T-cell (primary cell): ENCODE measurements at regions of chr9 and their contacts with region 1.

Region 1: GRCh38 chr9:2158111-2158610 is 143.0 kb downstream of the SMARCA2 start:
- DNase-seq: peak in 32 of 35 experiments; percentile 6 to 67 (median 28)
- ATAC-seq: peak; percentile 60 to 86 (median 65)
- H3K4me3 ChIP-seq: peak overlapping the region; percentile 48 to 71
- H3K4me3 Mint-ChIP-seq: peak overlapping the region; percentile 77 to 91 (median 78)
- H3K27ac ChIP-seq: peak overlapping the region; percentile 47
- H3K27ac Mint-ChIP-seq: peak overlapping the region; percentile 82 to 87
- H3K4me1 ChIP-seq: peaks cover 18 to 31% of the 10 kb centered on the region in 2 experiments
- H3K4me1 Mint-ChIP-seq: peaks cover 71 to 79% (median 74%) of the 10 kb centered on the region in 3 donors
- H3K27me3 ChIP-seq: no peaks in the 10 kb centered on the region
- H3K27me3 Mint-ChIP-seq: no peaks in the 10 kb centered on the region

Region 2: GRCh38 chr9:2008372-2008771 is 149.8 kb before region 1 on chr9:
- CTCF ChIA-PET with region 1: no interaction called
- POLR2A ChIA-PET with region 1: no interaction called
- DNase-seq: no peak
- ATAC-seq: no peak
- H3K4me3 ChIP-seq: no peak overlapping the region
- H3K4me3 Mint-ChIP-seq: no peak overlapping the region
- H3K27ac ChIP-seq: no peak overlapping the region
- H3K27ac Mint-ChIP-seq: no peak overlapping the region
- H3K4me1 ChIP-seq: peaks cover 0 to 15% of the 10 kb centered on the region in 2 experiments
- H3K4me1 Mint-ChIP-seq: peaks cover 19 to 27% (median 24%) of the 10 kb centered on the region in 3 donors
- H3K27me3 ChIP-seq: peaks cover 0 to 4% of the 10 kb centered on the region in 2 experiments
- H3K27me3 Mint-ChIP-seq: peaks cover 0 to 1% of the 10 kb centered on the region in 2 donors

Region 3: GRCh38 chr9:2023532-2023931 is 134.6 kb before region 1 on chr9:
- CTCF ChIA-PET with region 1: no interaction called
- POLR2A ChIA-PET with region 1: no interaction called
- DNase-seq: no peak
- ATAC-seq: no peak
- H3K4me3 ChIP-seq: no peak overlapping the region
- H3K4me3 Mint-ChIP-seq: peak overlapping the region; percentile 58 to 73 (median 62)
- H3K27ac ChIP-seq: peak overlapping the region; percentile 43
- H3K27ac Mint-ChIP-seq: peak overlapping the region; percentile 87 to 90
- H3K4me1 ChIP-seq: peaks cover 63 to 80% of the 10 kb centered on the region in 2 experiments
- H3K4me1 Mint-ChIP-seq: peaks cover 97 to 99% (median 98%) of the 10 kb centered on the region in 3 donors
- H3K27me3 ChIP-seq: no peaks in the 10 kb centered on the region
- H3K27me3 Mint-ChIP-seq: no peaks in the 10 kb centered on the region

Region 4: DNA sequence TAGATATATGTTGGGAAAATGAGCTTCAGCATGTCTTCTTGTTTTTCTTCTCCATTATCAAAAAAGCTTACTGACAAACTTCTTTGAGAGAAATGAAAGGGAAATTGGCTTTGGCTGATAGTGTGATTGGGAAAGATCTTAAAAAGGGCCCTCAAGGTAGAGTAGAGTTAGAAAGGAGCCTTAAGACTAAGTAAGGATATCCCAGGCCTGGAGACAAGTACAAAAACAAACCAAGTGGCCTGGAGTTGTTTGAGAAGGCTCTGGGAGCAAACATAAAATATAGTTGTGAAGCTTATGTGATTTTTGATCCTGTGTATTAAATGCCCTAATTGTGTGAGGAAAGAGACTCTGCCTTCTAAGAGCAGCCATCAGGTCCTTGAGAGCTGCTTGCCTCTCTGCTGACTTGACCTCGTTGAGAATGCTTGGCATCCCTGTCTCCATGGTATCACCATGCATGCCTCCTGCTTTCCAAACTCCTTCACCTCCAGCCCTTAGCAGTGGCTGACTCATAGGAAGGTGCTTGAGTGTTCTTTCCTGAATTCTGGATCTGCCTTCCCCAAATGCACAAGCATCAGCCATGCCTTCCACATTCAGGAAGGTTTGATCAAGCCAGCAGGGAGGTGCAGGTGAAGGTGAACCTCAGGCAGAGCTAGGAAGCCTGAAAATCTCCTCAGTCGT is 64.1 kb before region 1 on chr9:
- CTCF ChIA-PET with region 1: interaction called in 1 of 2 experiments, 3 read pairs
- POLR2A ChIA-PET with region 1: interaction called in 1 of 2 experiments, 12 read pairs
- DNase-seq: no peak
- ATAC-seq: no peak
- H3K4me3 ChIP-seq: no peak overlapping the region
- H3K4me3 Mint-ChIP-seq: no peak overlapping the region
- H3K27ac ChIP-seq: no peak overlapping the region
- H3K27ac Mint-ChIP-seq: no peak overlapping the region
- H3K4me1 ChIP-seq: no peaks in the 10 kb centered on the region
- H3K4me1 Mint-ChIP-seq: peaks cover 0 to 7% (median 2%) of the 10 kb centered on the region in 3 donors
- H3K27me3 ChIP-seq: no peaks in the 10 kb centered on the region
- H3K27me3 Mint-ChIP-seq: no peaks in the 10 kb centered on the region

Region 5: DNA sequence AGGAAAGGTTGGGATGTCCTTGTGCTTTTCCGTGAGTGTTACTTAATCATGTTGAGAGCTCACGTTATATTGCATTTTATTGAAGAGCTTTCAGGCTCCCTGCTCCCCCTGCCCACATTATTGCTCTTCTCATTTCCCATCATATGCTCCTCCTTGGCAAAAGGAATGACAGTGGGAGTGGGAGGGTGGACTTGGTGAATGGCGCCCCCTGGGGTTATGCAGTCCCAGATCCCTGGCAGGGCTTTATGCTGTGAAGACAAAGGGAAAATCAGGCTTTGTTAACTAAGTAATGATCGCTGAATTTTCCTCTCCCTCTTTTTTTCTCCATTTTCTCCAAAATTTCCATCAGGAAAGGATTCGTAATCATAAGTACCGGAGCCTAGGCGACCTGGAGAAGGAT is 23.6 kb after region 1 on chr9:
- CTCF ChIA-PET with region 1: interaction called in 1 of 2 experiments, 5 read pairs
- POLR2A ChIA-PET with region 1: interaction called in 1 of 2 experiments, 10 read pairs
- DNase-seq: peak in 1 of 35 experiments; percentile 33
- ATAC-seq: no peak
- H3K4me3 ChIP-seq: no peak overlapping the region
- H3K4me3 Mint-ChIP-seq: no peak overlapping the region
- H3K27ac ChIP-seq: no peak overlapping the region
- H3K27ac Mint-ChIP-seq: no peak overlapping the region
- H3K4me1 ChIP-seq: no peaks in the 10 kb centered on the region
- H3K4me1 Mint-ChIP-seq: peaks cover 0 to 9% (median 8%) of the 10 kb centered on the region in 3 donors
- H3K27me3 ChIP-seq: no peaks in the 10 kb centered on the region
- H3K27me3 Mint-ChIP-seq: no peaks in the 10 kb centered on the region

Region 6: DNA sequence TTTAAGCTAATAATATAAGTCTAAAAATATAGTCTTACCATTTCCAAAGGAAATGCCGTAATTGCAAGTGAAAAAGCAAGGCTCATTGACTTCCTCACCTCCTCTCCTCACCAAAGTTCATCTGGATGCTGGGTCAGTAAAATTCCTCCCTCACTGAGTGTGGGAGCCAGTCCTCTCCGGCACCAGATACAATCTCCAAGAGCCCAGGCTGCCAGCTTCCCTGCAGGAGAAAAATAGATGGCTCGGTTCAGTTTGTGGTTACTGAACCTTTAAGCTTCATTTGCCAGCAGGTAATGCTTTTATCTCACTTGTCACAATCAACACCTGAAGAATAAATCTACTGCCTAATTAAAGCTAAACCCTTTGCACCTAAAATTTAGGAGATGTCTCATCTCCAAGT is 348.2 kb after region 1 on chr9:
- CTCF ChIA-PET with region 1: no interaction called
- POLR2A ChIA-PET with region 1: no interaction called
- DNase-seq: no peak
- ATAC-seq: no peak
- H3K4me3 ChIP-seq: no peak overlapping the region
- H3K4me3 Mint-ChIP-seq: no peak overlapping the region
- H3K27ac ChIP-seq: no peak overlapping the region
- H3K27ac Mint-ChIP-seq: no peak overlapping the region
- H3K4me1 ChIP-seq: no peaks in the 10 kb centered on the region
- H3K4me1 Mint-ChIP-seq: no peaks in the 10 kb centered on the region
- H3K27me3 ChIP-seq: no peaks in the 10 kb centered on the region
- H3K27me3 Mint-ChIP-seq: no peaks in the 10 kb centered on the region